ENCODE measurements at regions of chr18 and their contacts with region 1.

Region 1: GRCh38 chr18:23131693-23132319 is 3.5 kb upstream of the CABLES1 start:
- DNase-seq: peak; percentile 60
- H3K4me3 ChIP-seq: no peak overlapping the region
- H3K27ac ChIP-seq: no peak overlapping the region
- H3K4me1 ChIP-seq: peaks cover 24% of the 10 kb centered on the region
- H3K27me3 ChIP-seq: no peaks in the 10 kb centered on the region
- CTCF ChIP-seq: peak; percentile 67 to 75

Region 2: DNA sequence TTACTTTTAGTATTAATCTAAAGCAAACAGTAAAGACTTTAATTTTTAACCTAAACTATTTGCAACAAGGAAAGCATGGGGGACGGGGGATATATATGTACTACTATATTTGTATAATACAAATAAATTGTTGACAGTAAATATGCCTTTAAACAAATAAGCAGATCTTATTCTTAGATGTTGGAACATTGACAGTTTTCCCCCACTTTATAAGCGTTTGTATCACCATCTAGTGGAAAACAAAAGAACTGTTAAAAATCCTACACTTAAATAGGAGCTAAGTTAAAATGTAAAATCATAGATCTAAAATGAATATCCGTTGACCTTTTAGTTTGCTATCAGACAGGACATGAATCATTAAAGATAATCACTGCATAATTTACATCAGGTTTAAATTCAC is 148.6 kb before region 1 on chr18:
- CTCF ChIA-PET with region 1: no interaction called
- dilution Hi-C with region 1: no loop called
- in situ Hi-C with region 1: no loop called
- intact Hi-C with region 1: no loop called
- DNase-seq: no peak
- H3K4me3 ChIP-seq: no peak overlapping the region
- H3K27ac ChIP-seq: no peak overlapping the region
- H3K4me1 ChIP-seq: peaks cover 9% of the 10 kb centered on the region
- H3K27me3 ChIP-seq: no peaks in the 10 kb centered on the region
- CTCF ChIP-seq: peak; percentile 34 to 42

Region 3: GRCh38 chr18:23032030-23032582 is 99.7 kb before region 1 on chr18:
- CTCF ChIA-PET with region 1: interaction called, 3 read pairs
- dilution Hi-C with region 1: no loop called
- in situ Hi-C with region 1: loop called in 1 of 2 experiments (anchors 5 kb)
- intact Hi-C with region 1: loop called (anchors 1 kb)
- DNase-seq: peak; percentile 76
- H3K4me3 ChIP-seq: no peak overlapping the region
- H3K27ac ChIP-seq: peak overlapping the region; percentile 75
- H3K4me1 ChIP-seq: peaks cover 26% of the 10 kb centered on the region
- H3K27me3 ChIP-seq: no peaks in the 10 kb centered on the region
- CTCF ChIP-seq: no peak

Region 4: GRCh38 chr18:23053776-23054457 is 77.9 kb before region 1 on chr18:
- CTCF ChIA-PET with region 1: no interaction called
- dilution Hi-C with region 1: no loop called
- in situ Hi-C with region 1: no loop called
- intact Hi-C with region 1: no loop called
- DNase-seq: peak; percentile 49
- H3K4me3 ChIP-seq: no peak overlapping the region
- H3K27ac ChIP-seq: no peak overlapping the region
- H3K4me1 ChIP-seq: no peaks in the 10 kb centered on the region
- H3K27me3 ChIP-seq: no peaks in the 10 kb centered on the region
- CTCF ChIP-seq: peak; percentile 29 to 32

Region 5: GRCh38 chr18:23237524-23238151 is 105.8 kb after region 1 on chr18:
- CTCF ChIA-PET with region 1: no interaction called
- dilution Hi-C with region 1: no loop called
- in situ Hi-C with region 1: no loop called
- intact Hi-C with region 1: loop called (anchors 5 kb)
- DNase-seq: peak; percentile 53
- H3K4me3 ChIP-seq: peak overlapping the region; percentile 1 to 45 (median 32)
- H3K27ac ChIP-seq: no peak overlapping the region
- H3K4me1 ChIP-seq: peaks cover 17% of the 10 kb centered on the region
- H3K27me3 ChIP-seq: no peaks in the 10 kb centered on the region
- CTCF ChIP-seq: peak; percentile 6 to 41

Region 6: DNA sequence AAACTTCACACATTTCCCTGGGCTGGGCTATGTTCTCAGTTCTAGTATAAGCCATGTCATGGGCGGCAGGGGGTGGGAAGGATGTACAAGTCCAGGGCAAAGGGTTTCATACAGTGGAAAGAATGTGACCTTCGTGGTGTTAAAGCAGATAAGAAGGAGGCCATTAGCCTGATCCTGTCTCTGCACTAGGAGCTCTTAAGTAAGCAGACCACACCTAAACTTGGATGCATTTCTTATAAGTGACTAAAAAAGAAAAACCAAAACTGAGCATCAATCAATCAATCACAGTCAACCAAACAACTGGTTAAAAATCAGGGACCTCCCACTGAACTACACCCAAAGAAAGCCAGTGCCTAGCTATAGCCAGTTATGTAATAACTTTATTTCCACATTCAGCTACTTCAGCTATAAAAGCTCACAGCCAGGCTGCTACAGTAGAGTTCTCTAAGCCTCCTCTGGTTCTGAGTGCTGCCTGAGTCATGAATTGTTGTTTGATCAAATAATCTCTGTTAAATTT is 274.5 kb after region 1 on chr18:
- CTCF ChIA-PET with region 1: no interaction called
- dilution Hi-C with region 1: no loop called
- in situ Hi-C with region 1: loop called in 1 of 2 experiments (anchors 10 kb)
- intact Hi-C with region 1: loop called (anchors 1 kb)
- DNase-seq: peak; percentile 9
- H3K4me3 ChIP-seq: no peak overlapping the region
- H3K27ac ChIP-seq: no peak overlapping the region
- H3K4me1 ChIP-seq: no peaks in the 10 kb centered on the region
- H3K27me3 ChIP-seq: no peaks in the 10 kb centered on the region
- CTCF ChIP-seq: no peak

Region 7: GRCh38 chr18:23586249-23587196 is 454.7 kb after region 1 on chr18 and contains the start of gene NPC1:
- CTCF ChIA-PET with region 1: no interaction called
- dilution Hi-C with region 1: no loop called
- in situ Hi-C with region 1: no loop called
- intact Hi-C with region 1: loop called (anchors 2 kb)
- DNase-seq: peak; percentile 97
- H3K4me3 ChIP-seq: peak within 1 kb of the TSS; percentile 90 to 93 (median 91)
- H3K27ac ChIP-seq: peak within 1 kb of the TSS; percentile 99
- H3K4me1 ChIP-seq: peaks cover 42% of the 10 kb centered on the region
- H3K27me3 ChIP-seq: no peaks in the 10 kb centered on the region
- CTCF ChIP-seq: peak; percentile 62 to 80
- total RNA-seq, gene NPC1: 83.4 to 104 TPM